Activated T-helper 2 cell treated with anti-CD3 and anti-CD28 coated beads, Interferon-gamma antibody, Interleukin-2, Interleukin-4, amounts not matched to agents 10 μg/mL and 5 μg/mL and 100 μg/mL, durations not matched to agents 14 hours and 24 hours and 36 hours (primary cell): ENCODE measurements at regions of chr17 and their contacts with region 1.

Region 1: DNA sequence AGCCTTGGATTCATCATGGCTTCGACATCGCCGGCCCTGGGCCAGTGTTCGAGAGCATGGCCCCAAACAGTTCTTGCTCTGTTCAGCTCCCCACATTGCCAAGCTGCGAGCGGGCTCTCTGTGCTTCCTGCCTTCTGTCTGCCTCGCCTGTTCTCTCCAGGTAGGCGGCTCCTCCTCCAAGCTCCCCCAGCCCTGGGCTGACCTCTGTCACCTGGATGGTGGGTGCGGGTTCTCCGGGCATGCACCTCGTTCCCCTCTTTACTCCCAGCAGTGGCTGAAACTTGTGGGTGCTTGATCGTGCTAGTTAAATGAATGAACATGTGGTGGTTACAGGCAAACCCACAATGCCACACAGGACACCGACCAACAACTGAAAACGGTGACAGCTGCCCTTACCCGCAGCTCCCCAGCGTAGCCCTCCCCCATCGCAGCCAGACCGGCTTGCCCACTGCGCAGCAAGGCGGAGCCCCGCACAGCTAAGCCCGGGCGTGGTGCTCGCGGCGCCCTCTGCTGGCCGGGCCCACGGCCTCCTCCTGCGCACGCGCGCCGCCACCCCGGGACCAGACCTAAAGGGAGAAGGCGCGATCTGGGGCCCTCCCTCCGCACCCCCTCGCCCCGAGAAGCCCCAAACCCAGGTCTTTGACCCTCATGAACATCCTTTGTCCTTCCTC is 23.0 kb upstream of the EIF1 start:
- DNase-seq: peak; percentile 87
- H3K4me3 Mint-ChIP-seq: peak overlapping the region; percentile 78
- H3K27ac Mint-ChIP-seq: peak overlapping the region; percentile 97
- H3K4me1 Mint-ChIP-seq: peaks cover 46% of the 10 kb centered on the region
- H3K27me3 Mint-ChIP-seq: peaks cover 7% of the 10 kb centered on the region

Region 2: DNA sequence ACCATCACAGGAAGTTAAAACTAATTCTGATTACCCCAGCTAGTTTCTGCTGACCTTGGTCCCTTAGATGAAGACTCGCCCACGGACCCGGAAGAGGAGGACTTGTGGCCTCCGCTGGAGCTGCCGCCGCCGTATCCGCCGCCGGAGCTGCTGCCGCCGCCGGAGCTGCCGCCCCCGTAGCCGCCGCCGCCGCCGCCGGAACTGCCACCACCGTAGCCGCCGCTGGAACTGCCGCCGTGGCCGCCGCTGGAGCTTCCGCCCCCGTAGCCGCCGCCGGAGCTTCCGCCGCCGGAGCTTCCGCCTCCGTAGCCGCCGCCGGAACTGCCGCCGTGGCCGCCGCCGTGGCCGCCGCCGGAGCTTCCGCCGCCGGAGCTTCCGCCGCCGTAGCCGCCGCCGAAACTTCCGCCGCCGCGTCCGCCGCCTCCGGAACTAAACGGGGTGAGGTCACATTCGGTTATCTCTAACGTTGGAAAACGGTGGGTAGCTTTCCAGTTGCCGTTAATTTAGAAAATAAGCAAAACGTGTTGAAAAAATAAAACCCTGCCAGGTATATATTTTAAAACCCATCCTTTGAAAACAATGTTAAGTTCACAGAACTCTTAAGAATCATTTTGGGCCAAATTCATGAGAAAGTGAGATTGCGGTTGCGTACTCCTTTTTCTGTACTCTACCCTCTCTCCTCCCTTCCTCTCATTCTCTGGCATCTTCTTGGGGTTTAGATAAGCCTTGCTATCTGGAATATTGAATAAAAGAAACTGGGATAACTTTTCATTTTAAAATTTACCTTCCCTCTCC is 846.8 kb before region 1 on chr17:
- intact Hi-C with region 1: loop called (anchors 5 kb)
- DNase-seq: peak; percentile 84
- H3K4me3 Mint-ChIP-seq: peak overlapping the region; percentile 96
- H3K27ac Mint-ChIP-seq: peak overlapping the region; percentile 86
- H3K4me1 Mint-ChIP-seq: peaks cover 26% of the 10 kb centered on the region
- H3K27me3 Mint-ChIP-seq: peaks cover 7% of the 10 kb centered on the region

Region 3: DNA sequence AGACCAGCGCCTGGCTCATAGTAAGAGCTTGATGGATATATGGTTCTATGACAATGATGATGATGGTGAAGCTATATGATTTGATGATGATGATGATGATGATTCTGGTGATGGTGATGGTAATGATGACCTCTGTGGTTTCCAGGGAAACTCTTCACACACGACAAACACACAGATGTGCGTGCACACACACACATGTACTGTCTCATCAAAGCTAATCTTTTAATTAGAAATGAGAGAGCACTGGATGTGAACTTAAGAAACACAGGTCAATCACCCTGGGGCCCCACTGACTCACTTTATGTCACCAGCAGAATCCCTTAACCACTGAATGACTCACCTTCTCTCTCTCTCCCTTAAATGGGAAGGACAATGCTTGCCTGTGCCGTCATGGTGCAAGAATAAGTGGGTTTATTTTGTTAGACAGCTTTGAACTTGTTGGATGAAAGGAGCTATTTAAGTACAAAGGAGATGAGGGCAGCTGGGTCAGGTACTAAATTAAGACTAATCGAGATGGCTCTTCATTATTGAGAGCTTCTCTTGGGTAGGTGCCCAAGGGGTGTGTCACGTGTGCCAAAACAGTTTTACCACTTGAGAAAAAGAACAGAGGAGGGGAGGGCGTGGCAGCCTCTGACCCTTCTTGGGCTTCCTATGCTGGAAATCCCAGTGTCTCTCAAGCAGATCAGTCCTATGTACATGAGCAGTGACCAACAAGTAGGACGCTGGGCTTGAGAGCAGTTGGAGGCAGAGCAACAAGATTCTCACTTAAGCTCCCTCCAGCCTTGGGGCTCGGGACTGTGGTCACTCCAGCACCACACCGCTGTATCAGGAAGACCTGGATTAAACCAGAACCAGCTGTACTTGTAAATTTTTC is 261.7 kb before region 1 on chr17:
- intact Hi-C with region 1: loop called (anchors 2 kb)
- DNase-seq: no peak
- H3K4me3 Mint-ChIP-seq: no peak overlapping the region
- H3K27ac Mint-ChIP-seq: peak overlapping the region; percentile 82
- H3K4me1 Mint-ChIP-seq: peaks cover 24% of the 10 kb centered on the region
- H3K27me3 Mint-ChIP-seq: no peaks in the 10 kb centered on the region

Region 4: DNA sequence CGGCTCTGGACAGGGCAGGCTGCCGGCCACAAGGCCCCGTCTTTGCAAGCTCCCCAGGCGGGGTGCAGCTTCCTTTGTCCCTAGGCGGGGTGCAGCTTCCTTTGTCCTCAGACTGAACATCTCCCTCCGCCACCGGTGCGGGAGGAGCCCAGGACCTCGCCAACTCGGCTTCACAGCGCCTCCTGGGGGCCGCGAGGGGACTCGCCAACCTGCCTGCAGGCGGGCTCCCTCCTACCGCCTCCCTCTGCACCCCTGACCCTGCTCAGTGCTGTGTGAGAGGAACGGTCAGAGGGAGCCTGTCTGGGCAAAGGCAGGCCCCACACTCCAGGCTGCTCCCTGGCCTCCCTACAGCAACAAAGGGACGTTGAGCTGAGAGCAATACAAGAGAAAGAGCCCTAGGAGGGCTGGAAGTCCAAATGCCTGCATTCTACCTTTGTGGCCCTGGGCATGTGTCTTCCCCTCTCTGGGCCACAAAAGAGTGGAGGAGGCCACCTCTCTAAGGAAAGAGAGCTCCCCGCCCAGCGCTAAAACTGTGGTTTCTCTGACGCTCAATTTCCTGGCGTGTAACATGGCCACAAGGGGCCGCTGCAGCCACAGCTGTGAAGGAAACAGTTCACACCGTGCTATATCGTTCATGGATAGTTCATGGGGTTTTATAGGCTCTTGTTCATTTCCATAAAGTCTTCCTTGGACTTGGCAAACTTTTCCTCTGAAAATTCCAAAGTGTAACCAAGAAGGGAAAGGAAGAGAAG is 116.7 kb before region 1 on chr17:
- intact Hi-C with region 1: loop called (anchors 2 kb)
- DNase-seq: peak; percentile 77
- H3K4me3 Mint-ChIP-seq: peak overlapping the region; percentile 18
- H3K27ac Mint-ChIP-seq: peak overlapping the region; percentile 84
- H3K4me1 Mint-ChIP-seq: peaks cover 21% of the 10 kb centered on the region
- H3K27me3 Mint-ChIP-seq: peaks cover 2% of the 10 kb centered on the region

Region 5: GRCh38 chr17:41654133-41654907 is 11.4 kb before region 1 on chr17:
- intact Hi-C with region 1: no loop called
- DNase-seq: no peak
- H3K4me3 Mint-ChIP-seq: no peak overlapping the region
- H3K27ac Mint-ChIP-seq: no peak overlapping the region
- H3K4me1 Mint-ChIP-seq: no peaks in the 10 kb centered on the region
- H3K27me3 Mint-ChIP-seq: no peaks in the 10 kb centered on the region

Region 6: GRCh38 chr17:41678907-41679739 is 13.4 kb after region 1 on chr17:
- intact Hi-C with region 1: loop called (anchors 1 kb)
- DNase-seq: peak; percentile 79
- H3K4me3 Mint-ChIP-seq: peak overlapping the region; percentile 81
- H3K27ac Mint-ChIP-seq: peak overlapping the region; percentile 97
- H3K4me1 Mint-ChIP-seq: peaks cover 54% of the 10 kb centered on the region
- H3K27me3 Mint-ChIP-seq: no peaks in the 10 kb centered on the region

Region 7: GRCh38 chr17:41724476-41725050 is 58.9 kb after region 1 on chr17:
- intact Hi-C with region 1: no loop called
- DNase-seq: no peak
- H3K4me3 Mint-ChIP-seq: no peak overlapping the region
- H3K27ac Mint-ChIP-seq: no peak overlapping the region
- H3K4me1 Mint-ChIP-seq: no peaks in the 10 kb centered on the region
- H3K27me3 Mint-ChIP-seq: peaks cover 2% of the 10 kb centered on the region

Region 8: GRCh38 chr17:42527273-42527703 is 861.6 kb after region 1 on chr17:
- intact Hi-C with region 1: no loop called
- DNase-seq: peak; percentile 58
- H3K4me3 Mint-ChIP-seq: no peak overlapping the region
- H3K27ac Mint-ChIP-seq: no peak overlapping the region
- H3K4me1 Mint-ChIP-seq: peaks cover 26% of the 10 kb centered on the region
- H3K27me3 Mint-ChIP-seq: peaks cover 2% of the 10 kb centered on the region